CD4-positive, alpha-beta memory T cell (primary cell): ENCODE measurements at regions of chr3 and their contacts with region 1.

Region 1: DNA sequence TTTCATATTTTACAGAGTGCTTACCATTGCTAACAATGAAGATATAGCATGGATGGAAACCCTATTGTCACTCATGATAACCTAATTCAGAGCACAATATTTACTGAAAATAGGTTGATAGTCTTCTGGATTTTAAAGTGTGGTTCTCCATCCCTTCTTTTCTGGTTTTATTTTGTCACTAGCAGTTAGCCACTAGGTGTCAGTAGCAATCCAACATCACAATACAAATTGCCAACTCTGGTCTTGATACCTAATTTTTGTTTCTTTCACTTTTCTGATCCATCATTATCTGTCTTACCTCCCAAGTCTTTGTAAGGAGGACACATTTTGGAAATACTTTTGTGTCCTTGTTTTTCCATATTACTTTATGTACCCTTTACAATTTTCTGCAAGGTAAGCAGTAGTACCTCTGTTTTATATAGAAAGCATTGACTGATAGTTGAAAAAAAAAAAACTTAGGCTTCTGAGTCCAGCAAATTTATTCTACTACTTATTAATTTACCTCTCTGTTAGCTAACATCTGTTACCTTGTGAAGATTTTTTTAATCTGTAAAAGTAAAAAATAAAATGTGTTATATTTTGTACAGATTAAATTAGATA is 28.3 kb upstream of the CRYBG3 start:
- DNase-seq: peak; percentile 41 to 66 (median 61)
- H3K4me3 ChIP-seq: no peak overlapping the region
- H3K4me3 Mint-ChIP-seq: no peak overlapping the region
- H3K27ac ChIP-seq: no peak overlapping the region
- H3K27ac Mint-ChIP-seq: no peak overlapping the region
- H3K4me1 ChIP-seq: no peaks in the 10 kb centered on the region
- H3K4me1 Mint-ChIP-seq: no peaks in the 10 kb centered on the region
- H3K27me3 ChIP-seq: no peaks in the 10 kb centered on the region
- H3K27me3 Mint-ChIP-seq: no peaks in the 10 kb centered on the region

Region 2: DNA sequence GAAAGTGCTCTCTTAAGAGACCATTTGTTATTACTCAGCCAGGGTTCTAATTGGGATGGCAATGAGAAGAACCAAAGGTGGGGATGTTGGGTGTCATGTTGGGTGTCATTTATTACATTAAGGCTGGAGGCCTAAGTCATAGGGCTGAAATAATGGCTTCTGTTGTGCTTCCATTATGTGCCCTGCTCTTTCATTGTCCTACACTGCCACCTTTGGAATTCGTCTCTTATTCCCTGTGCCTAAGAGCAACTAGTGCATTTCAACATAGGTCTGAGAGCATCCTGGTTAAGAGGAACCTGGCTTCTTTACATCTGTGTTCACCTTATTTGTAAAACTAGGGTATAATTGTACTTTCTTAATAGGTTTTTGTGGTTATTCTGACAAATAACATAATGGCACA is 146.5 kb after region 1 on chr3:
- CTCF ChIA-PET with region 1: interaction called, 16 read pairs
- POLR2A ChIA-PET with region 1: no interaction called
- intact Hi-C with region 1: loop called (anchors 1 kb)
- DNase-seq: peak in 4 of 5 donors; percentile 28 to 33 (median 32)
- H3K4me3 ChIP-seq: no peak overlapping the region
- H3K4me3 Mint-ChIP-seq: no peak overlapping the region
- H3K27ac ChIP-seq: no peak overlapping the region
- H3K27ac Mint-ChIP-seq: peak overlapping the region in 3 of 7 donors; percentile 38 to 65 (median 39)
- H3K4me1 ChIP-seq: no peaks in the 10 kb centered on the region
- H3K4me1 Mint-ChIP-seq: peaks cover 0 to 4% (median 2%) of the 10 kb centered on the region in 4 donors
- H3K27me3 ChIP-seq: no peaks in the 10 kb centered on the region
- H3K27me3 Mint-ChIP-seq: no peaks in the 10 kb centered on the region

Region 3: GRCh38 chr3:97971677-97972567 is 178.4 kb after region 1 on chr3 and contains the start of gene RIOX2:
- CTCF ChIA-PET with region 1: interaction called, 4 read pairs
- POLR2A ChIA-PET with region 1: no interaction called
- intact Hi-C with region 1: loop called (anchors 1 kb)
- DNase-seq: peak; percentile 74 to 84 (median 80)
- H3K4me3 ChIP-seq: peak within 1 kb of the TSS in 1 of 2 donors; percentile 54
- H3K4me3 Mint-ChIP-seq: peak within 1 kb of the TSS; percentile 88 to 96 (median 94)
- H3K27ac ChIP-seq: peak within 1 kb of the TSS; percentile 41
- H3K27ac Mint-ChIP-seq: peak within 1 kb of the TSS; percentile 91 to 96 (median 95)
- H3K4me1 ChIP-seq: peaks cover 46% of the 10 kb centered on the region
- H3K4me1 Mint-ChIP-seq: peaks cover 39 to 70% (median 55%) of the 10 kb centered on the region in 4 donors
- H3K27me3 ChIP-seq: no peaks in the 10 kb centered on the region
- H3K27me3 Mint-ChIP-seq: no peaks in the 10 kb centered on the region
- total RNA-seq, gene RIOX2: 32.2 to 35.5 TPM

Region 4: GRCh38 chr3:98166396-98166795 is 372.9 kb after region 1 on chr3 and contains the start of gene OR5H15:
- CTCF ChIA-PET with region 1: no interaction called
- POLR2A ChIA-PET with region 1: no interaction called
- intact Hi-C with region 1: no loop called
- DNase-seq: no peak
- H3K4me3 ChIP-seq: no peak within 1 kb of the TSS
- H3K4me3 Mint-ChIP-seq: no peak within 1 kb of the TSS
- H3K27ac ChIP-seq: no peak within 1 kb of the TSS
- H3K27ac Mint-ChIP-seq: no peak within 1 kb of the TSS
- H3K4me1 ChIP-seq: no peaks in the 10 kb centered on the region
- H3K4me1 Mint-ChIP-seq: no peaks in the 10 kb centered on the region
- H3K27me3 ChIP-seq: no peaks in the 10 kb centered on the region
- H3K27me3 Mint-ChIP-seq: peaks cover 2 to 4% of the 10 kb centered on the region in 2 donors
- total RNA-seq, gene OR5H15: not detected

Region 5: GRCh38 chr3:98329392-98330124 is 536.0 kb after region 1 on chr3:
- CTCF ChIA-PET with region 1: no interaction called
- POLR2A ChIA-PET with region 1: no interaction called
- intact Hi-C with region 1: loop called (anchors 1 kb)
- DNase-seq: peak; percentile 38 to 56 (median 51)
- H3K4me3 ChIP-seq: no peak overlapping the region
- H3K4me3 Mint-ChIP-seq: peak overlapping the region in 1 of 8 donors; percentile 0
- H3K27ac ChIP-seq: no peak overlapping the region
- H3K27ac Mint-ChIP-seq: peak overlapping the region in 1 of 7 donors; percentile 6
- H3K4me1 ChIP-seq: no peaks in the 10 kb centered on the region
- H3K4me1 Mint-ChIP-seq: peaks cover 0 to 4% (median 2%) of the 10 kb centered on the region in 4 donors
- H3K27me3 ChIP-seq: no peaks in the 10 kb centered on the region
- H3K27me3 Mint-ChIP-seq: peaks cover 12 to 13% of the 10 kb centered on the region in 2 donors